Heart right ventricle (tissue), 16 donors: ENCODE measurements at regions of chr16 and their contacts with region 1.

Region 1: DNA sequence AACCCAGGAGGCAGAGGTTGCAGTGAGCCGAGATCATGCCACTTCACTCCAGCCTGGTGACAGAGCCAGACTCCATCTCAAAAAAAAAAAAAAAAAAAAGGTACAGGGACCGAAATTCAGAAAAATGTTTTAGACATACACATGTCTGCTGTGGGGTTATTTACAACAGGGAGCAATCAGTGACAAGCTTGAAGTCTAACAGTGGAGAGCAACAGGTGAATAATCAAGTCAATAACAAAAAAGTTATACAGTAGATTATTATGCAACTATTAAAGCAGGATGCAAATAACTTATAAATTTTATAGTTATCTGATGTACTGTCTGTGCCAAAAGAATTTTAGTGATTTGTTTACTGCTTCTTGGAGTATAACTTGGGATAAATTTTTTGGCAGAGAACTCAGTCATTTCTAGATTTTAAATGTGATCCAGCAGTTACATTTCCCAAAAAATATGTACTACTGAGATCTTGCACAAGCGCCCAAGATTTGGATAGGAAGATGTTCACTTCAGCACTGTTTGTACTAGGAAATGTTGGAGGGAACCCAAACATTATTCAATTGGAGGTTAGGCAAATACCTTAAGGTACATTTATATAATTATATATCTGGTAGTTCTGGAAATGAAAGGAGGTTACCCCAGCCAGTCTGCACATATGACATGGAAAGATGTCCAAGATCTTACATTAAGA is 34.1 kb downstream of the EEF2K start:
- DNase-seq: no peak
- ATAC-seq: peak in 2 of 8 donors; percentile 25 to 71
- H3K4me3 ChIP-seq: no peak overlapping the region
- H3K27ac ChIP-seq: peak overlapping the region in 5 of 10 donors; percentile 2 to 68 (median 37)
- H3K4me1 ChIP-seq: peaks cover 0 to 36% (median 9%) of the 10 kb centered on the region in 9 donors
- H3K27me3 ChIP-seq: no peaks in the 10 kb centered on the region
- CTCF ChIP-seq: no peak

Region 2: GRCh38 chr16:22091758-22092600 is 148.2 kb before region 1 on chr16 and contains the start of gene VWA3A:
- intact Hi-C with region 1: no loop called
- DNase-seq: no peak
- ATAC-seq: peak in 7 of 8 donors; percentile 56 to 82 (median 69)
- H3K4me3 ChIP-seq: no peak within 1 kb of the TSS
- H3K27ac ChIP-seq: peak within 1 kb of the TSS in 2 of 10 donors; percentile 40 to 51
- H3K4me1 ChIP-seq: peaks cover 0 to 28% (median 6%) of the 10 kb centered on the region in 9 donors
- H3K27me3 ChIP-seq: peaks cover 0 to 2% (median 0%) of the 10 kb centered on the region in 7 donors
- CTCF ChIP-seq: no peak
- total RNA-seq, gene VWA3A: 0.25 to 1.1 (median 0.31) TPM in 9 of 10 donors, not detected in the other

Region 3: GRCh38 chr16:22141746-22142145 is 98.4 kb before region 1 on chr16:
- intact Hi-C with region 1: no loop called
- DNase-seq: no peak
- ATAC-seq: no peak
- H3K4me3 ChIP-seq: no peak overlapping the region
- H3K27ac ChIP-seq: no peak overlapping the region
- H3K4me1 ChIP-seq: no peaks in the 10 kb centered on the region
- H3K27me3 ChIP-seq: no peaks in the 10 kb centered on the region
- CTCF ChIP-seq: peak in 1 of 9 donors; percentile 35

Region 4: DNA sequence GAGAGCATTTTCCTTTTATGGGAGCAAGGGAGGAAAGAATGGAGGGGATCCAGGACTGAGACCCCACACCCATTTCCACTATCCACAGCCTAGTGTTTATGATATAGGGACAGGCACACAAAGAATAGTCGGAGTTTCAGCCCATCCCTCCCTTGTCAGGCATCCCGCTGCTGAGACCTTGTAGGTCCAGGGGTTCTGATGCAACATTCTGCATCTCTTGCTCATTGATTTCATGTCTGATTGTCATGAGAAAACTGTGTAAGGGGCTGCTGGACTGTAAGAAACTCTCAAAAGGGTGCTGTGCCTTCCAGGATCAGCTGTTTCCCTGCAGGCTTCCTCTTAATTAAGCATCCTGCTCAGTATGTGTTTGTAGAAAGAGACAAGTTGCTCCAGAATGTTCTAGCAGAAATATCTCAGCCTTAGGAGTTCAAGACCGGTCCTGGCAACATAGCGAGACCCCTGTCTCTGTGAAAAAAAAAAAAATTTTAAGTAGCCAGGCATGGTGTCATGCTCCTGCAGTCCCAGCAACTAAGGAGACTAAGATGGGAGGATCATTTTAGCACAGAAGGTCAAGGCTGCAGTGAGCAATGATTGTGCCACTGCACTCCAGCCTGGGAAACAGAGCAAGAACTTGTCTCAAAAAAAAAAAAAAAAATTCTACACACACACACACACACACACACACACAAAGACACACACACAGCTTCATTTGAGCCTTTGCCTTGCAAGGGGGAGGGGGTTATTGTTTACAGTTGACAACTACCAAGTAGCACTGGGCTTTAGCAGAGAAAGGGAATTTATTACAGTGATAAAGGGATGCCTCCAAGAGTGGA is 51.9 kb after region 1 on chr16:
- intact Hi-C with region 1: loop called in 1 of 10 experiments (anchors 5 kb)
- DNase-seq: no peak
- ATAC-seq: no peak
- H3K4me3 ChIP-seq: no peak overlapping the region
- H3K27ac ChIP-seq: no peak overlapping the region
- H3K4me1 ChIP-seq: peaks cover 0 to 8% (median 6%) of the 10 kb centered on the region in 9 donors
- H3K27me3 ChIP-seq: no peaks in the 10 kb centered on the region
- CTCF ChIP-seq: no peak

Region 5: DNA sequence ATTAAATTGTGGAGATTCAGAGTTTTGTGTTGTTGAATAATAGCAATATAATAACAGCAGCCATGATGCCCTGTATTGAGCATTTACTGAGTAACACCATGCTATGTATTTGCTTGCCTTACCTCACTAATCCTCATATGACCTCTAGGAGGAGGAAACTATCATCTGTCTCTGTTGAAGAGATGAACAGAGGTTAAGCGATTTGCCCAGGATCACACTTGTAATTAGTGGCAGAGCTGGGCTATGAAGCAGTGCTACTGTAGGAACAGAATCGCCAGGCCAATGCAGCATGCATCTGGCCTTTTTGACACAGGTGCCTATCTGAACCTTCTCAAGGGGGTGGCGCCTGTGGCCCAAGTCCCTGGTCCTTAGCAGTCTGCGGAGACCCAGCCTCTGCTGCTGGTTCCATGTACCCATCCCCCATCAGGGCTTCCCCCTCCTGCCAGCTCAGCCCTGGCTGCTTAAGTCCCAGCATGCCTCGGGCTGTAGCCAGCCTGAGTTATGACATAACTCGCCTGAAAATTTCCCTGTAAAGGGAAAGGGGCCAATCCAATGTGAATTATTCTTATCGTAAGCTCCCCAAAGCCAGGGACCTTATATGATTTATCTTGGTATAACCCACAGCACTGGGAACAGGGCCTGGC is 523.4 kb after region 1 on chr16:
- intact Hi-C with region 1: no loop called
- DNase-seq: no peak
- ATAC-seq: peak in 1 of 8 donors; percentile 39
- H3K4me3 ChIP-seq: no peak overlapping the region
- H3K27ac ChIP-seq: no peak overlapping the region
- H3K4me1 ChIP-seq: peaks cover 0 to 14% (median 0%) of the 10 kb centered on the region in 9 donors
- H3K27me3 ChIP-seq: peaks cover 0 to 2% (median 0%) of the 10 kb centered on the region in 7 donors
- CTCF ChIP-seq: no peak